K562 (cell line): ENCODE measurements at regions of chr5 and their contacts with region 1.

Region 1: DNA sequence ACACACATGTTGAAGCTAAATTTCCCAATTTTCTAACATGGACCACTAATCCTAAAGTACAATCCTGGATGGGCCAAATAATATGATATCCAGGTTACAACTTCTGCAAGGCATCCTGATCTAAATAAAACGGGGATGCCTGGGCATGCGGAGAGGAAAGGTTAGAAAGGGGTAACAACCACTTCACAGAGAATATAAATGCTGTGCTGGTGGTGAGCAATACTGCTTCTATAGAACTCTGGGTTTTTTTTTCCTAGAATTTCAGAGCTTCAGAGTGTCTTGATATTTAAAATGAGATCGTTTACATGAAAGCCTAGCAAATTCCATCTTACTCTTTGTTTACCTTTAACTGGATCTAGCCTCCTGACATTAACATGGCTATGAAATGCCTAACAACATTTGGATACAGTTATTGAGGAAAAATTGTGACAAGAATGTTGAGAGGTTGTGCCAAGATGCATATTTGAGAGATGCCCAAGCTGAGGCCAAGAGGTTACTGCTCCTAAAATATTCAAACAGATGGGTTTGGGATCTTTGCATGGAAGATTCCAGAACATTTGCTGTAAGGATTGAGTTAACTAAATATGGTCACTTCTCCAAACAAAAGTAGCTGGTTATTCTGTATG is 22.4 kb downstream of the TNFAIP8 start:
- DNase-seq: no peak
- ATAC-seq: no peak
- H3K4me3 ChIP-seq: no peak overlapping the region
- H3K27ac ChIP-seq: no peak overlapping the region
- H3K4me1 ChIP-seq: peaks cover 4 to 20% of the 10 kb centered on the region in 2 experiments; a peak in 4 of 5 replicates
- H3K27me3 ChIP-seq: no peaks in the 10 kb centered on the region
- CTCF ChIP-seq: no peak
- EP300 ChIP-seq: no peak
- POLR2A ChIP-seq: no peak
- RAD21 ChIP-seq: no peak

Region 2: GRCh38 chr5:119393201-119393691 is 15.1 kb after region 1 on chr5:
- CTCF ChIA-PET with region 1: no interaction called
- POLR2A ChIA-PET with region 1: interaction called, 13 read pairs
- in situ Hi-C with region 1: no loop called
- intact Hi-C with region 1: no loop called
- DNase-seq: no peak
- ATAC-seq: no peak
- H3K4me3 ChIP-seq: no peak overlapping the region
- H3K27ac ChIP-seq: no peak overlapping the region
- H3K4me1 ChIP-seq: peaks cover 0 to 8% of the 10 kb centered on the region in 2 experiments; a peak in 3 of 5 replicates
- H3K27me3 ChIP-seq: no peaks in the 10 kb centered on the region
- CTCF ChIP-seq: no peak
- EP300 ChIP-seq: no peak
- POLR2A ChIP-seq: no peak
- RAD21 ChIP-seq: no peak

Region 3: GRCh38 chr5:119445544-119445943 is 67.4 kb after region 1 on chr5:
- CTCF ChIA-PET with region 1: no interaction called
- POLR2A ChIA-PET with region 1: no interaction called
- in situ Hi-C with region 1: no loop called
- intact Hi-C with region 1: no loop called
- DNase-seq: no peak
- ATAC-seq: no peak
- H3K4me3 ChIP-seq: no peak overlapping the region
- H3K27ac ChIP-seq: no peak overlapping the region
- H3K4me1 ChIP-seq: no peaks in the 10 kb centered on the region
- H3K27me3 ChIP-seq: no peaks in the 10 kb centered on the region
- CTCF ChIP-seq: no peak
- EP300 ChIP-seq: no peak
- POLR2A ChIP-seq: no peak
- RAD21 ChIP-seq: no peak